AG04449 (cell line): ENCODE measurements at regions of chr20 and their contacts with region 1.

Region 1: DNA sequence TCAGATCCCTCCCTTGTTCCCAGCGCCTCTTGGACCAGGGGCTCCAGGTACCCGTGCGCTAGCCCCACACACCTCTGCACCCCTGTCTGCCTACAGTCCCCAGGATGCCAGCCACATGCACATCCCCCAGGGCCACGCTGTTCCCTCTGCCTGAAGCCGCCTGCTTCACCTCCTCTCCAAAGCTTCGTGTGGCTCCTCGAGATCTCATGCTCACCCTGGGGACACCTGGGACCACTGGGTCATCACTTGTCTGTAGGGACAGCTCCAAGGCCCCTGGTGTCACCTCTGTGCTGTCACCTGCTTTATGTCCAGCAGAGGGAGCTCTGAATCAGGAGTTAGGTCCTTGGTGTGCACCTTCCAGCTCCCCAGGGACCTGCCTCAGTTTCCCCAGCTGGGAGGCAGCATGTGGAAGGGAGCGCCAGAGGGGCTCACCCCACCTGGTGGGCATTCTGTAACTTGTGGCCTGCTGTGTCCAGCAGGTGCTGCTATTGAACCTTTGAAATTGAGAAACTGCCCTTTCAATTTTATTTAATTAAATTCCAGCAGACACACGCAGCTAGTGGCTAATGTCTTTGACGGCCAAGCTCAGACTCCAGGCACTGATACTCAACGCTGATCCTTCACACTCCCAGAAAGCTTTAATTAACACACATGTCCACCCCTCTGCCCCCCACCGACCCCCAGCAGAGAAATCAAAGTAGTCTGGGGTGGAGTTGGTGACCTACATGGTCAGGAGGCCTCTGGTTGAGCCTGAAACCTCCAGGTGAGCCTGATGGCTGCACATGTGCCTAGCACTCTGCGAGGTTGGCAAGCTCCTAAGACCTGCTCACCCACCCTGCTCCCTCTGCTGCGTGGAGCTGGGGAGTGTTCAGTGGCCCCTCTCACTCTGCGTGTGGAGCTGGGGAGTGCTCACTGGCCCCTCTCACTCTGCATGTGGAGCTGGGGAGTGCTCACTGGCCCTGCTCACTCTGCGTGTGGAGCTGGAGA is 7.6 kb upstream of the YTHDF1 start:
- DNase-seq: no peak
- H3K4me3 ChIP-seq: no peak overlapping the region
- CTCF ChIP-seq: peak; percentile 70

Region 2: DNA sequence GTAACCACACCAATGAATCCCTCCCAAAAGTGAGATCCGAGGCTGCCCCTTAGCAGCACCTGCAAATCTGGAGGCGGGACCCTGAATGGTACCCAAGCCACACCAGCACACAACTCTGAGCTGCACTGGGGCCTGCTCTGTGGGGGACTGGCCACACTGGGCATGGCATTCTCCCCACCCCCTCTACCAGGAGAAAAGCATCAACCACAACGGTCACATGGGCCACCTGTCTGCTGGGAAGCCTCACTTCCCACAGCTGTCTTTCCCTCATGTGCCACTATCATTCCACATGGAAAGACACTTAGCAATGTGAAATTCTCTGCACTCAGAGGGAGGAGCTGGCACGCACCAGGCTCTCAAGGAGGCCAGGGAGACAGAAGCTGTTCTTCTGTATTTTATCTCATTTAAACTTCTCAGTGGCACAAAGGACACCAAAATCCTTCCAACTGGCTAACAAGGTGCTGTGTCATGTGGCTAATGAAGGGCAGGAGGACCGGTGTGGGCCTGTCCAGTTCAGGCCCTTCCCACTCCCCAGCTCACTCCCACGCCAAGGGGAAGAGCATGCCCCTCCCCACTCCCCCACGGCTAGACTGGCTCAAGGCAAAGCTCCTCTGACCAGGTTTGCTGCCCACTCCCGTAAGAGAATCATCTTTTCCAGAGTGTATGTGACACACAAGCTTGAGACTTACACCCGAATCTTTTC is 26.6 kb before region 1 on chr20:
- CTCF ChIA-PET with region 1: interaction called, 11 read pairs
- POLR2A ChIA-PET with region 1: no interaction called
- DNase-seq: no peak
- H3K4me3 ChIP-seq: no peak overlapping the region
- CTCF ChIP-seq: no peak

Region 3: DNA sequence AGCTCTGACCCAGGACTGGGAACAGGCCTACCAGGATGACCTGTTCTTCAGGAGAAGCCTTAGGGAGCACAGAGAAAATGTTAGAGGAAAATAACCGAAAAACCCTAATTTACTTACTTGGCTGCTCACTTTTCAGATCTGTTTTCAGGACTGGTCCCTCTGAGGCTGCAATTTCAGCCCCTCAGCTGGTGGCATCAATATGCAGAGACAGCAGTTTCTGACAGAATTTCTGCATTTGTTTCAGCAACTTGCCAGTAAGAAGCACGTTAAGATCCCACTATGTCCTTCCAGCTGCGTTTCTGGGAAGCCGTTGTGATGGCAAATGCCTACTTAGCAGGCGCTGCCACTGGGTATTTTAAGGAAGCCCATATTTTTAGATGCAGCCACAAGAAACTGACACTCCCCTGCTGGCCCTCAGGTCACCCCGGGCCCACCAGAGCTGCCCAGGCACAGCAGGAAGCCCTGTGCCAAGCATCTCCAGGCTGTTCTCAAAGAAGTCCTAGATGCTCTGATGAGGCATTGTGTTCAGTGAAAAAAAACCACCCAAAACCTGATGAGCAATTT is 15.1 kb before region 1 on chr20:
- CTCF ChIA-PET with region 1: interaction called, 73 read pairs
- POLR2A ChIA-PET with region 1: no interaction called
- DNase-seq: no peak
- H3K4me3 ChIP-seq: no peak overlapping the region
- CTCF ChIP-seq: no peak

Region 4: DNA sequence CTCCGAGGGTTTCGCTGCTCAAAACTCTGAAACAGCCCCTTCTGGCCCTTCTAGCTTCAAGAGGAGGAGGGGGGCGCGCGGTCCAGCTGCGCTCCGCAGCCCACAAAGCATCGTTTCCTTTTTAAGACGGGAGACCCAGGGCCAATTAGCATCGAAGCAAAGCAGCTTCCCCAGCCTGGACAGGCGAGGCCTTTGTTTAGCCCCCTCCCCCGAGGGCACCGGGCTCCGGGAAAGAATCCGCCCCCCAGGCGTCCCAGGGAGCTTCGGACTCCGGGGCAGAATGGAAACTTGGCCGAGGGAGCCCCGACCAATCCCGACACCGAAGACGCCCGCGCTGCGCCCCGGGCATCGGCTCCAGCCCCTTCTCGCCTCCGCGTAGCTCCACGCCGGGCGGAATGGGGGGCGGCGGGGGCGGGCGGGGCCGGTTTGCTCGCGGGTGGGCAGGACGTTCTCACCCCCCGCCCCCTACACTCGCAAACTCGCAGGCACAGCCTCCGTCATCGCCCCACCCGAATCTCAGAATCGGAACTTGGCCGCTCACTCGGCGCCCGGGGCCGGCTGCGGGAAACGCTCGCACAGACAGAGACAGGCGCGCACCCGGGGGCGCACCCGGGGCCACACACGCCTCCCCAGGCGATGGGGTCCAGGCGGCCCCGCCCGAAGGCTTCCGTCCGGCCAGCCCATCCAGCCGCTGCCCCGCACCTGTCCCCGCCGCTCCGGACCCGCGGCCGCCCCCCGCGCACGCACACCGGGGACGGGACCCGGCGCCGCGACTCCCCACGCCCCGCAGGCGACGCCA is 30.1 kb after region 1 on chr20:
- CTCF ChIA-PET with region 1: interaction called, 79 read pairs
- POLR2A ChIA-PET with region 1: no interaction called
- DNase-seq: no peak
- H3K4me3 ChIP-seq: peak overlapping the region; percentile 15; the same call in 1 of the 2 replicates
- CTCF ChIP-seq: no peak

Region 5: DNA sequence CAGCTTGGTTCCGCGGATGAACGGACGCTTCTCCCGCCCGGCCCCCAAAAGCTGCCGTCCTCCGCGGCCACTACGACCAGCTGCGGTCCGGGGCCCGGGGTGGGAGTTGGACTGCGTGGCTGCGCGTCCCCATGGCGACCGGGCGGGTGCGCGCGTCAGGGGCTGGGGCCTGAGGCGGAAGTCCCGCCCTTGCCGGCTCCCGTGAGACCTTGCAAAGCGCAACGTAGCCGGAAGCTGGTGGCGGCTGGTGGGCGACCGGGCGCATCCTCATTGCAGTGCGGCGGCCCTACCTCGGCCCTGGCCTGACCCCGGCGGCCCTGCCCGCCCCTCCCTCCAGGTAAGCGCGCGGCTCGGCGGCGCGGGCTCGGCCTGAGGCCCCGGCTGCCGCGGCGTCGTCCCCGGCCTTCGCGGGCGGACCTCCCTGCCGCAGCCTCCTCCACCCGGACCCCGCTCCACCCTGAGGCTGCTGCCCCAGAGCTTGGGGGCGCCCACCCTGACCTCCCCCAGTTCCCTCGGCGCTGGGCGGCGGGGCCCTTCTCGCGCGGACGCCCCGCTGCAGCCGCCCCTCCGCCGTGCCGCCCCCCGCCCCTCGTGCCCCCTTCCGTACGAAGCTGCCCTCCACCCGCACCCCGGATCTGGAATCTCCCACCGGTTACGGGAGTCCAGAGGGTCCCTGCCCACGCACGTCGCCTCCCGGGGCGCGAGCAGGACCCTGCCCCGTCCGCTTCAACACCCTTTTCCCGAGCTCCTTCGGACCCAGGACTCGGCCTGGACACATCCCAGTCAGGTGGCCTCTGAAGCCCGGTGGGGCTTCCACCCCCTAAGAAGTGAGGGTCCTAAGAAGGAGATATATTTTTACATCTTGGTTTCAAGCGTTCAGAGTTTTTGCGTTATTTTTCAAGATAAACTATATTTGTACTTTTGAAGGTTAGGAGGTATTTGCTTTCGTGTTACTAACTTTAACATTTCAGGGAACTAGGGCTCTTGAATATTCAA is 49.4 kb after region 1 on chr20 and contains the start of gene ARFGAP1:
- CTCF ChIA-PET with region 1: interaction called, 142 read pairs
- POLR2A ChIA-PET with region 1: interaction called, 4 read pairs
- DNase-seq: peak; percentile 19
- H3K4me3 ChIP-seq: peak within 1 kb of the TSS; percentile 94
- CTCF ChIP-seq: no peak

Region 6: GRCh38 chr20:63309261-63310071 is 86.0 kb after region 1 on chr20:
- CTCF ChIA-PET with region 1: interaction called, 26 read pairs
- POLR2A ChIA-PET with region 1: interaction called, 3 read pairs
- DNase-seq: no peak
- H3K4me3 ChIP-seq: no peak overlapping the region
- CTCF ChIP-seq: peak; percentile 96

Region 7: DNA sequence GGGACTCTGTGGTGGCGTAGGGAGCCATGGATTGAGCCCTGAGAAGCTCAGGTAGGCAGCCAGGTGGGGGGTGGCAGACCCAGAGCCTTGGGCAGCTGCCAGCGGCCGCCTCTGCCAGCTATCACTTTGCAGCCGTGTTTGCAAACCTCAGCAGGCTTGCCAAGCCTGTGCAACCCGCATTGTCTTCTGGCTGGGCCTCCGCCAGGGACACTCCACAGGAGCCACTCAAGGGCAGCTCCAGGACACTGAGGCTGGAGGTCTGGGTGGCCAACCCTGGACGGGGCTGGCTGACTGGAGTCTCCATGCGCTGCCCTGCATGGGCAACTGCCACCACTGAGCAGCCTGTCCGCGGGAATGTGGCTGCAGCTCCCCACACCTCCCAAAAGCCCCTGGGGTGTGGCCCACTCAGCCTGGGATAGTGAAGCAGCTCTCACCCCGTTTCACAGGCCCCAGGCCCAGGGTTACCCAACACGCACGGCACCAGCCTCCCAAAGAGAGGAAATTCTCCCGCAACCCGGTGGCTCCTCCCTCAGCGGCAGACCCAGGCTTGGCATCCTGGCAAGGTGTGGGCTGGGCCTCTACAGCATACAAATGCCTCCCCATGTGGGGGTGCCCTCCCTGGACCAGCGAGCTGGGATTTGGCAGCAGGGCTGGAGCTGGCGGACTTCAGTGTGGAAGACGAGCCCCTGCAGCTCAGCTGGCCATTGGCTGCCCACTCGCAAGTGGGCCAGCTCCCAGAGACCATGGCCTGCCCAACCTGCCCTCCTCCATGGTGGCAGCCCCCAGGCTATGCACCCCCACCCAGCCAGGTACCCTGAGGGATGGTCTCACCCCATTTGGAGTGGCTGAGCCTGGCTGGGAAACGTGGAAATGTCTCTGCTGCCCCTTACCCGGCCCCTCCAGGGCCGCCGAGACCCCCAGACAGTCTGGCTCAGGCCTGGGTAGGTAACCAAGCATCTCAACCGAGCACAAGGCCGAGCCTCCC is 134.7 kb after region 1 on chr20:
- CTCF ChIA-PET with region 1: no interaction called
- POLR2A ChIA-PET with region 1: no interaction called
- DNase-seq: no peak
- H3K4me3 ChIP-seq: no peak overlapping the region
- CTCF ChIP-seq: no peak